PC-9 (cell line): ENCODE measurements at regions of chr15 and their contacts with region 1.

Region 1: GRCh38 chr15:40421246-40422157 is 15.9 kb downstream of the IVD start:
- DNase-seq: peak in 1 of 2 experiments; percentile 68
- H3K4me3 ChIP-seq: no peak overlapping the region
- H3K27ac ChIP-seq: peak overlapping the region; percentile 40
- H3K4me1 ChIP-seq: peaks cover 20% of the 10 kb centered on the region
- H3K27me3 ChIP-seq: no peaks in the 10 kb centered on the region
- CTCF ChIP-seq: no peak

Region 2: DNA sequence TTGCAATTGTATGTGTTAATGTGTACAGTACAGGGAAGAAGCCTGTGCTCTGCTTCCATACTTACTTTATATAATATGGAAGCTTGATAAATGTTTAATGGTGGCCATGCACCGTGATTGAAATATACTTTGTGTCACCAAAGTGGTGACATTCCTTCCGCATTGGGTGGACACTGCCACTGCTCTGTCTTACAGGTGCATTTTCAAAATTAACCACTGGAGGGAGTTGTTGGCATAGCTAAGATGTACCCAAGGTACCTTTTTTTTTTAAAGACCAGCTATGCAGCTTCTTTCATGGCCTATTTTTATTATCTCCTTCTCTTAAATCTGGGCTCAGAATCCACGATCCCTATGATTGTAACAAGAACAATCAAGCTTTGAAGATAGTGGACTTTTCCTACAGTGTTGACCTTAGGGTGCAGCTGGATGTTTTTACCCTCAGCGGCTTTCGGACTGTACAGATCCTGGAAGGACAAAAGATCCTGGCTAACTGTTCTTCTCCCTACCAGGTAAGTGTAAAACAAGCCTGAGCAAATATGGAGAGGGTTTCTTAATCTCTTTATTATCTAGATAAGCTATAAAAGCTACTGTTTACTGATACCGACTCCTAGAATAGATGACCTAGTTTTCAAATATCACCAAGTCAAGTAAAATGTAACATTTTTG is 204.2 kb before region 1 on chr15:
- CTCF ChIA-PET with region 1: no interaction called
- POLR2A ChIA-PET with region 1: no interaction called
- intact Hi-C with region 1: loop called (anchors 10 kb)
- DNase-seq: peak; percentile 55 to 64
- H3K4me3 ChIP-seq: no peak overlapping the region
- H3K27ac ChIP-seq: no peak overlapping the region
- H3K4me1 ChIP-seq: no peaks in the 10 kb centered on the region
- H3K27me3 ChIP-seq: no peaks in the 10 kb centered on the region
- CTCF ChIP-seq: peak; percentile 85

Region 3: DNA sequence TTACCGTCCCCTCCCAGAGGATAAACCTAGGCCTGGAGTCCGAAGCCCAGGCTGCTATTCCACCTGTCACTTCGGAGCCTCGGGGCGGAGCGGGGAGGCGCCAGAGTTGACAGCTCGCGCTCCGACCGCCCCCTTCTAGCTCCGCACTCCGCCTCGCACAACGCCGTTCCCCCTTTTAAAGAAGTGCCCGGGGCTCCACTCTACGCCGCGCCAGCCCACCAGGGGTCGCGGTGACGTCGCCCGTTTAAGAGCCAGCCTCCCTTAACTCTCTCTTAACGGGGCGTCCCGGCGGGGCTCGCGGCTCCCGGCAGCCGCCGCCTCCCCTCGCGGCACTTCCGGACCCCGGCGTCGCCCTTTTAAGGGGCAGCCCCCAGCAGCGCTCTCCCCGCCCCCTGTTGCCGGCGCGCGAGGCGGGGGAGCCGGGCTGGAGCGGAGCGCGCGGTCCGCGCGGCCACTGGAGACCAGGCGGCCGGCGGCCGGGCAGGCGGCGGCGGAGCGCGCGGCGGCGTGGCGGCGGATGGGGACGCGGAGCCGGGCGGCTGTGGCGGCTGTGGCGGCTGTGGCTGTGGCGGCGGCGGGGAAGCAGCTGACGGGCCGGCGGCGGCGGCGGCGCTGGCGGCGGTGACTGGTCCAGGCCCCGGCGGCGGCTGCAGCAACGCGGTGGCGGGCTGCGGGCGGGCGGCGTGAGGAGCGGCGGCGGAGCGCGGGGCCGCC is 98.1 kb before region 1 on chr15 and contains the start of gene INAFM2:
- CTCF ChIA-PET with region 1: interaction called, 8 read pairs
- POLR2A ChIA-PET with region 1: no interaction called
- intact Hi-C with region 1: loop called (anchors 1 kb)
- DNase-seq: peak; percentile 59 to 81
- H3K4me3 ChIP-seq: peak within 1 kb of the TSS; percentile 59
- H3K27ac ChIP-seq: no peak within 1 kb of the TSS
- H3K4me1 ChIP-seq: peaks cover 10% of the 10 kb centered on the region; the same call in 1 of the 2 replicates
- H3K27me3 ChIP-seq: no peaks in the 10 kb centered on the region
- CTCF ChIP-seq: peak; percentile 50
- total RNA-seq, gene INAFM2: 2.4 and 3.1 TPM in 2 replicates

Region 4: GRCh38 chr15:40338041-40338657 is 83.4 kb before region 1 on chr15:
- CTCF ChIA-PET with region 1: no interaction called
- POLR2A ChIA-PET with region 1: no interaction called
- intact Hi-C with region 1: loop called (anchors 1 kb)
- DNase-seq: peak; percentile 63 to 78
- H3K4me3 ChIP-seq: peak overlapping the region; percentile 94
- H3K27ac ChIP-seq: peak overlapping the region; percentile 91
- H3K4me1 ChIP-seq: peaks cover 54% of the 10 kb centered on the region
- H3K27me3 ChIP-seq: no peaks in the 10 kb centered on the region
- CTCF ChIP-seq: peak; percentile 88

Region 5: DNA sequence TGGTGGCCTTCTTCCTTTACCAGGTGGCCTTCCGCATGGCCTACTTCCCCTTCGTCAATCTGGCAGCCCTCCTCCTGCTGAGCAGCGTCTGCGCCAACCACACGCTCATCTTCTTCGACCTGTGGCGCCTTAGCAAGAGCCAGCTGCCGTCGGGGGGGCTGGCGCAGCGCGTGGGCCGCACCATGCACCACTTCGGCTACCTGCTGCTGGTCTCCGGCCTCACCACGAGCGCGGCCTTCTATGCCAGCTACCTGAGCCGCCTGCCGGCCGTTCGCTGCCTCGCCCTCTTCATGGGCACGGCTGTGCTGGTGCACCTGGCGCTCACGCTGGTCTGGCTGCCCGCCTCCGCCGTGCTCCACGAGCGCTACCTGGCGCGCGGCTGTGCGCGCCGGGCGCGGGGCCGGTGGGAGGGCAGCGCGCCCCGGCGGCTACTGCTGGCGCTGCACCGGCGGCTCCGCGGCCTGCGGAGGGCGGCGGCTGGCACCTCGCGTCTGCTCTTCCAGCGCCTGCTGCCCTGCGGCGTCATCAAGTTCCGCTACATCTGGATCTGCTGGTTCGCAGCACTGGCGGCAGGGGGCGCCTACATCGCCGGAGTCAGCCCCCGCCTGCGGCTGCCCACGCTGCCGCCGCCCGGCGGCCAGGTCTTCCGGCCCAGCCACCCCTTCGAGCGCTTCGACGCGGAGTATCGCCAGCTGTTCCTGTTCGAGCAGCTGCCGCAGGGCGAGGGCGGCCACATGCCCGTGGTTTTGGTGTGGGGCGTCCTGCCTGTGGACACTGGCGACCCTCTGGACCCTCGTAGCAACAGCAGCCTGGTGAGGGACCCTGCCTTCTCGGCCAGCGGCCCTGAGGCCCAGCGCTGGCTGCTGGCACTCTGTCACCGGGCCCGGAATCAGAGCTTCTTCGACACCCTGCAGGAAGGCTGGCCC is 53.6 kb before region 1 on chr15:
- CTCF ChIA-PET with region 1: no interaction called
- POLR2A ChIA-PET with region 1: no interaction called
- intact Hi-C with region 1: loop called (anchors 1 kb)
- DNase-seq: peak; percentile 59 to 91
- H3K4me3 ChIP-seq: no peak overlapping the region
- H3K27ac ChIP-seq: no peak overlapping the region
- H3K4me1 ChIP-seq: no peaks in the 10 kb centered on the region
- H3K27me3 ChIP-seq: no peaks in the 10 kb centered on the region
- CTCF ChIP-seq: peak; percentile 59

Region 6: GRCh38 chr15:40382580-40383456 is 38.7 kb before region 1 on chr15 and contains the start of gene KNSTRN:
- CTCF ChIA-PET with region 1: interaction called, 3 read pairs
- POLR2A ChIA-PET with region 1: no interaction called
- intact Hi-C with region 1: loop called (anchors 5 kb)
- DNase-seq: peak; percentile 78 to 87
- H3K4me3 ChIP-seq: peak within 1 kb of the TSS; percentile 76
- H3K27ac ChIP-seq: peak within 1 kb of the TSS; percentile 45
- H3K4me1 ChIP-seq: peaks cover 50% of the 10 kb centered on the region
- H3K27me3 ChIP-seq: no peaks in the 10 kb centered on the region
- CTCF ChIP-seq: no peak
- total RNA-seq, gene KNSTRN: 85.2 and 95.6 TPM in 2 replicates

Region 7: GRCh38 chr15:40593588-40594428 is 172.3 kb after region 1 on chr15 and contains the start of gene KNL1:
- CTCF ChIA-PET with region 1: interaction called, 8 read pairs
- POLR2A ChIA-PET with region 1: interaction called, 15 read pairs
- intact Hi-C with region 1: no loop called
- DNase-seq: peak; percentile 79 to 94
- H3K4me3 ChIP-seq: peak within 1 kb of the TSS; percentile 93
- H3K27ac ChIP-seq: peak within 1 kb of the TSS; percentile 88
- H3K4me1 ChIP-seq: peaks cover 8% of the 10 kb centered on the region; the same call in 1 of the 2 replicates
- H3K27me3 ChIP-seq: no peaks in the 10 kb centered on the region
- CTCF ChIP-seq: no peak
- total RNA-seq, gene KNL1: 16.2 and 27.5 TPM in 2 replicates